Right cardiac atrium (tissue), 5 donors: ENCODE measurements at regions of chr18 and their contacts with region 1.

Region 1: GRCh38 chr18:70421471-70422390 is 132.9 kb downstream of the SOCS6 start:
- DNase-seq: peak; percentile 81 to 85 (median 84)
- ATAC-seq: peak; percentile 92 to 98
- H3K4me3 ChIP-seq: no peak overlapping the region
- H3K27ac ChIP-seq: no peak overlapping the region
- H3K4me1 ChIP-seq: peaks cover 6% of the 10 kb centered on the region
- H3K27me3 ChIP-seq: no peaks in the 10 kb centered on the region

Region 2: DNA sequence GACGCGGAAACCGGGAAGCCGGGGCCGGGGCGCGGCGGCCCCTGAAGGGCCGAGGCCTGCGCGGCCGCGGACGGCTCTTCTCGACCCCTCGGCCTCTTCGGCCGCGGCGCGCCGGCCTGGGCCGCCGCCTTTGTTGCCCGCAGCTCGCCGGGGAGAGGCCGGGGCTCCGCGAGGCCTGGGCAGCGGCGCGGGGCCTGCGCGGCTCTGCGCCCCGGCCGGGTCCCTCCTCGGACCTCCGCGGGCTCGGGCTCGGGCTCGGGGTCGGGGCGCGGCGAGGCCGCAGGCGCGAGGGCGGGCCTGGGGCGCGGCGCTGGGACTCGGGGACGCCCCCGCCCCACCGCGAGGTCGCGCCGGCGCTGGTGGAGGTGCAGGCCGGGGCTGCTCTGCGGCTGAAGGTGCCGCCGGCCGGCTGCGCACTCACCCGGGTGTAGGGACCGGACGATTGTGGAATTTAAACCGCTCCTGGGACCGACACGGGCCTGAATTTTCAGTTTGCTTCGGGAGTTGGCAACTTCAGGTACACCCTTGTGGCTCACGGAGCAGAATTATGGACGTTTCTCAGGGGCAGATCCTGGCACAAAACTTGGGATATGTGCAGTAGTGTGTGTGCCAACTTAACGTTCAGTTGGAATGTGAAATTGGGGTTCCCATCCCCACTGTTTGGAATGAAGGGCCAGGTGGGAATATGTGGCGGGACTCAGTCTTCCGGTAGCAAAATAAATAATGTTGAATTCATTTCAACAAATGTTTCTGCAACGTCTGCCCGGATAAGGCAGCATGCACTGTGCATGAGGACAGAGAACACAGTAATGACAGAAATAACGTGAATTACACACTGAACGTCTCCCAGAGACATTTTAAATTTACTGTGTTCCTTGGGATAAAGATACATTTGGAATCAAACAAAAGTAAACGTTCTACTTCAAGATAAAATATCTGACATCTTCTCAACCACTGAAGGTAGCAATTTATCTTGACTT is 132.1 kb before region 1 on chr18:
- intact Hi-C with region 1: loop called in 1 of 4 experiments (anchors 10 kb)
- DNase-seq: peak; percentile 38 to 74 (median 73)
- ATAC-seq: peak; percentile 53 to 55
- H3K4me3 ChIP-seq: peak overlapping the region; percentile 99
- H3K27ac ChIP-seq: peak overlapping the region; percentile 76
- H3K4me1 ChIP-seq: peaks cover 10% of the 10 kb centered on the region
- H3K27me3 ChIP-seq: no peaks in the 10 kb centered on the region

Region 3: DNA sequence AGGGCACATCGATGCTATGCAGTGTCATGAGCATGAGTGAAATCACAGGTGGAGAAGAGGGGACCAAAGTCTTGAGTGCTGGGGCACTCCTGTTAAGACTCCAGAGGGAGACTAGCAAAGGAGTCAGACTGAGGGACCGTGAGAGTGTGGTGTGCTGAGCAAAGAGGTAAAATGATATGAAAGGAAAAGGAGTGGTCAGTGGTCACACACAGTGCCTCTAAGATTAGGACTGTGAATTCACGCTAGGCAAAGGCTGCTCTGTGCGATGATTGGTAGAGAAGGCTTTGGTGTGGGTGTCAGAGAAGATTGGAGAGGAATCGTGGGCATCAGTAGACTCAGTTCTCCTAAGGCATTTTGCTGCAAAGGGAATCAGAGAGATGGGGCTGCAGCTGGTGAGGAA is 120.1 kb before region 1 on chr18:
- intact Hi-C with region 1: loop called in 2 of 4 experiments (anchors 10 kb)
- DNase-seq: no peak
- ATAC-seq: no peak
- H3K4me3 ChIP-seq: no peak overlapping the region
- H3K27ac ChIP-seq: no peak overlapping the region
- H3K4me1 ChIP-seq: peaks cover 8% of the 10 kb centered on the region
- H3K27me3 ChIP-seq: no peaks in the 10 kb centered on the region

Region 4: DNA sequence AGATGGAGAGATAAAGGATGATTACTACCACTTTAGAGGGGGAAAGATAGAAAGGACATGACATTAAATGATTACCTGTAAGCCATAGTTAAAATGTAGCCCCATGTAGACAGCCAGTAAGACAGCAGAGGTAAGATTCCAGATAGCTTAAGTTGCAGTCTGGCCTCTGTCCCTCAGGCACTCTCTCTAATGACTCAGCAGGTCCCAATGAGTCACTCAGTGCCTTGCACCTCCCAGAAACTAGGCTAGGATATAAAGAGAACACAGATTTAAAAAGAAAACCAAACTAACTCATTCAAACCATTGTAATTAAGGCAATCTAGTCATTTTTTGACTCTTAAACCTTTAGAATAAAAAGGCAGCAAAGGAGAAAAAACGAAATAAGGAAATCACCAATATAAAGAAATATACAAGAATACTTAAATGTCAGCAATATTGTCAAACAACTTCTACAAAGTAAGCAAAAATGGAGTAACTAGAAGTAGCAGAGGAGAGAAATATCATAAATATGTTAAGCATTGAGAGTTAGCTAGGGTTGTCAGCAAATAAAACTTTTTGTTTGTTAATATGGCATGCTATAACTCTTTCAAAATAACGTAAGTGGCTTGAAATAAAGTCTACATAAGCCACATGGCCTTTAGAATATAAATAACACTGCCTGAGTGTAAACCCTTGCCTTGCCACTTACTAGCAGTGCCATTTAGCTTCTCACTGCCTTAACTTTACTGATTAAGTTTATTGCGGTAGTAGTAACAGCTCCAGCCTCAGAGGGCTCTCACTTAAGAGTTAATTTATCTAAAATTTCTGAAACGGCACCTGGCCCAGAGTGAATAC is 84.4 kb before region 1 on chr18:
- intact Hi-C with region 1: no loop called
- DNase-seq: peak in 1 of 3 donors; percentile 19
- ATAC-seq: peak; percentile 79 to 84
- H3K4me3 ChIP-seq: no peak overlapping the region
- H3K27ac ChIP-seq: no peak overlapping the region
- H3K4me1 ChIP-seq: no peaks in the 10 kb centered on the region
- H3K27me3 ChIP-seq: no peaks in the 10 kb centered on the region

Region 5: GRCh38 chr18:70732188-70732587 is 310.5 kb after region 1 on chr18:
- intact Hi-C with region 1: no loop called
- DNase-seq: no peak
- ATAC-seq: no peak
- H3K4me3 ChIP-seq: no peak overlapping the region
- H3K27ac ChIP-seq: no peak overlapping the region
- H3K4me1 ChIP-seq: no peaks in the 10 kb centered on the region
- H3K27me3 ChIP-seq: no peaks in the 10 kb centered on the region